Activated naive CD4-positive, alpha-beta T cell treated with anti-CD3 and anti-CD28 coated beads for 36 hours (primary cell): ENCODE measurements at regions of chr1 and their contacts with region 1.

Region 1: GRCh38 chr1:9910425-9911178 is 533 bp upstream of the CTNNBIP1 start:
- DNase-seq: peak; percentile 100
- H3K4me3 Mint-ChIP-seq: peak overlapping the region; percentile 95
- H3K27ac Mint-ChIP-seq: peak overlapping the region; percentile 93
- H3K4me1 Mint-ChIP-seq: peaks cover 20% of the 10 kb centered on the region
- H3K27me3 Mint-ChIP-seq: no peaks in the 10 kb centered on the region

Region 2: DNA sequence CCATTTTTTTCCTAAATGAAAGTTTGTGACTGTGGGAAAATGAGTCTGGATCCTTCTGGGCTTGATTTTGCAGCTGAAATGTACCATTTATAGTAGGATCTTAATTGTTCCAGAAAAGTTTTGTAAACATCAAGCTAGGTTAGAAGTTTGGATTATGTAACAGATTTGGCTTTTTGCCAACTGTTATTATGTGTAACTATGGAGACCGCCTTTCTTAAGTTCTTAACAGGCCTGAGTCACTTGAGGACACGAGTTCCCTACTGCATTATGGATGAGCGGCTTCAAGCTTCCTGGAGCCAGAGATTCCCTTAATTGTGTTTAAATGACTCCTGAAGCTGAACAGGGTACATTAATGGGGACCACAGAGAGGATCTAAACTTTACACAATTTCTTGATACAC is 349.2 kb before region 1 on chr1:
- CTCF ChIA-PET with region 1: no interaction called
- intact Hi-C with region 1: no loop called
- DNase-seq: no peak
- H3K4me3 Mint-ChIP-seq: no peak overlapping the region
- H3K27ac Mint-ChIP-seq: no peak overlapping the region
- H3K4me1 Mint-ChIP-seq: peaks cover 26% of the 10 kb centered on the region
- H3K27me3 Mint-ChIP-seq: no peaks in the 10 kb centered on the region

Region 3: DNA sequence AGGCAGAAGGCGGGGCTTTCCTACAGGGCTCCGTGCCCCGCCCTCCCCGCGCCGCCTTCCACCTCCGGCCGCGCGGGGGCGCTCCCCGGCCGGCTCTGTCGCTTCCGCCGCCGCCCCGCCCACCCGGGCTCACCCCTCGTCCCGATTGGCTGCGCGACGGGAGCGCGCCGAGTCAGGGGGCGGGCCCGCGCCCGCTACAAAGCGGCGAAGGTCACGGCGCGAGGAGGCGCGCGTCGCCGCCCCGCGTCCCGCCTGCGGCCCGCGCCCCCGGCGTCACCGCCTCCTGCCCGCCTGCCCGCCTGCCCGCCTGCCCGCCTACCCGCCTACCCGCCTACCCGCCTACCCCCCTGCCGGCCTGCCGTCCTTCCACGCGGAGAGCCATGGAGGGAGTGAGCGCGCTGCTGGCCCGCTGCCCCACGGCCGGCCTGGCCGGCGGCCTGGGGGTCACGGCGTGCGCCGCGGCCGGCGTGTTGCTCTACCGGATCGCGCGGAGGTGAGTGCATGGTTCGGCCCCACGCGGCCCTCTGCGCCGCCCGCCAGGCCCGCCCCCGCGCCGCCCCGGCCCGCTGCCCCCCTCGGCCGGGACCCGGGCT is 322.0 kb before region 1 on chr1 and contains the start of gene TMEM201:
- CTCF ChIA-PET with region 1: interaction called, 4 read pairs
- intact Hi-C with region 1: loop called (anchors 5 kb)
- DNase-seq: peak; percentile 92
- H3K4me3 Mint-ChIP-seq: peak within 1 kb of the TSS; percentile 78
- H3K27ac Mint-ChIP-seq: no peak within 1 kb of the TSS
- H3K4me1 Mint-ChIP-seq: peaks cover 38% of the 10 kb centered on the region
- H3K27me3 Mint-ChIP-seq: no peaks in the 10 kb centered on the region
- total RNA-seq, gene TMEM201: 9.1 to 9.8 TPM

Region 4: GRCh38 chr1:9874959-9875635 is 35.5 kb before region 1 on chr1:
- CTCF ChIA-PET with region 1: interaction called, 19 read pairs
- intact Hi-C with region 1: loop called (anchors 1 kb)
- DNase-seq: peak; percentile 84
- H3K4me3 Mint-ChIP-seq: no peak overlapping the region
- H3K27ac Mint-ChIP-seq: no peak overlapping the region
- H3K4me1 Mint-ChIP-seq: no peaks in the 10 kb centered on the region
- H3K27me3 Mint-ChIP-seq: no peaks in the 10 kb centered on the region

Region 5: DNA sequence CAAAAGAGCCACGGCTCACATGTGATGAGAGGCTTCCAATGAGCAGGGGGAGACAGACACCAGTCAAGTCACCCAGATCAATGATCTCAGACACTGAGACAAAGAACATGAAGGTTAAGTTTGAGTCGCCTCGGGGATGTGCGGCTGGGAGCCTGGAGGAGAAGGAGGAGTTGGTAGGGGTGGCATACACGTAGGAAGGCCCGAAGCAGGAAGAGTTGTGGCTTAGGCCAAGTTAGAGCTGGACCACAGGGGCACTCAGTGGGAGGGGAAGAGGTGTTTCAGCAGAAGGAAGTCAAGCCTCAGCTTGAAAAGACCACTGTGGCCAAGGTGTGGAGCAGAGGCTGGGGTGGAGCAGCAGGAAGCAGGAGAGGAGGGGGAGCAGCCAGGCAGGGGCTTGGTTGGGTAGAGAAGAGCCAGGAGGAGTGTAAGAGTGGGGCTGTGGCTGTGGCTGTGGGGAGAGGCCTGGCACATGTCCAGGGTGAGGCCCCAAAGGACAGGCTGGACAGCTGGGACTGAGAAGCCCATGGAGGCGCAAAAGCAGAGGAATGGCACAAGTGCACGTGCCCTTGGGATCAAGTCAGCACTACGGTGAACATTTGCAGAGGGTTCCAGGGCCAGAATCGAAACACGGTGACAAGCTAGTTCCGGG is 28.2 kb before region 1 on chr1:
- CTCF ChIA-PET with region 1: interaction called, 19 read pairs
- intact Hi-C with region 1: no loop called
- DNase-seq: no peak
- H3K4me3 Mint-ChIP-seq: no peak overlapping the region
- H3K27ac Mint-ChIP-seq: no peak overlapping the region
- H3K4me1 Mint-ChIP-seq: peaks cover 5% of the 10 kb centered on the region
- H3K27me3 Mint-ChIP-seq: no peaks in the 10 kb centered on the region

Region 6: DNA sequence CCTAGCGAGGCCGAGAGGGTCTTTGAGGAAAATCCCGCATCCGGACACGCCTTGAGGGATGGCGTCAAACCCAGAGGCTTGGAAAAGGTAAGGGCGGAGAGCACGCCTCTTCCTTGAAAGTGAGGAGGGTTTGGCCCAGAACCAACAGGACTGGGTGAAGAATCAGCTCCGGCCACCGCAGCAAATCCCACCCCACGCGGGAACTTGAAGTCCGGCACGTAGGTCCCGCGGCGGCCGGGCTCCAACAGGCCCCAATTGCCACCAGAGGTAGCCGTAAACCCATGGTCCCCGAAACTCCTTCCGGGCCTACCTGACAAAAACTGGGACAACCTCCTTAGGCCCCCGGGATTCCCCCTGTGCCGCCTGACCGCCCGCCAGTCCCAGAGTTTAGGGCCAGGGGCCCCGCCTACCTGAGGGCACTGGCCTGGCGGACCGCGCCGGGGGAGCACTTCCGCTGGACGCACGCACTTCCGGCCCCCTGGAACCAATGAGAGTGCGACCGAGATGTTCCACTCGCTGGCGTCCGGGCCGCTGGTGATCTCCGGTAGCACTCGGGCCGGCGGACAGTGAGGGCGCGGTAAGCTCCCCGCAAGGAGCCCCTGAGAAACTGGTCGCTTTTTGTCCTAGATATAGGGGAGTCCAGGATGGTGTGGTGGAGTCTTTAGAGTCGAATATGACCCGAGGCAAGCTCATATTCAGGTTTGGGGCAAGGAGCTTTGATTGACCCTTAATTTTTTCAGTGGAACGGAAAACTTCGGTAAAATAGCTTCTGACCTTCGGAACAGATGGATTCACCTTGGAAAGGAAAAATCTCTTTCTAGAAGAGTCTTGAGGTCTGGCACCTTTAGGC is 32.6 kb after region 1 on chr1 and contains the starts of genes LZIC and NMNAT1:
- CTCF ChIA-PET with region 1: no interaction called
- intact Hi-C with region 1: loop called (anchors 1 kb)
- DNase-seq: peak; percentile 94
- H3K4me3 Mint-ChIP-seq: peak within 1 kb of the TSS; percentile 95
- H3K27ac Mint-ChIP-seq: peak within 1 kb of the TSS; percentile 92
- H3K4me1 Mint-ChIP-seq: peaks cover 27% of the 10 kb centered on the region
- H3K27me3 Mint-ChIP-seq: no peaks in the 10 kb centered on the region
- total RNA-seq, gene LZIC: 26.1 to 27.0 TPM
- total RNA-seq, gene NMNAT1: 7.5 to 8.0 TPM

Region 7: DNA sequence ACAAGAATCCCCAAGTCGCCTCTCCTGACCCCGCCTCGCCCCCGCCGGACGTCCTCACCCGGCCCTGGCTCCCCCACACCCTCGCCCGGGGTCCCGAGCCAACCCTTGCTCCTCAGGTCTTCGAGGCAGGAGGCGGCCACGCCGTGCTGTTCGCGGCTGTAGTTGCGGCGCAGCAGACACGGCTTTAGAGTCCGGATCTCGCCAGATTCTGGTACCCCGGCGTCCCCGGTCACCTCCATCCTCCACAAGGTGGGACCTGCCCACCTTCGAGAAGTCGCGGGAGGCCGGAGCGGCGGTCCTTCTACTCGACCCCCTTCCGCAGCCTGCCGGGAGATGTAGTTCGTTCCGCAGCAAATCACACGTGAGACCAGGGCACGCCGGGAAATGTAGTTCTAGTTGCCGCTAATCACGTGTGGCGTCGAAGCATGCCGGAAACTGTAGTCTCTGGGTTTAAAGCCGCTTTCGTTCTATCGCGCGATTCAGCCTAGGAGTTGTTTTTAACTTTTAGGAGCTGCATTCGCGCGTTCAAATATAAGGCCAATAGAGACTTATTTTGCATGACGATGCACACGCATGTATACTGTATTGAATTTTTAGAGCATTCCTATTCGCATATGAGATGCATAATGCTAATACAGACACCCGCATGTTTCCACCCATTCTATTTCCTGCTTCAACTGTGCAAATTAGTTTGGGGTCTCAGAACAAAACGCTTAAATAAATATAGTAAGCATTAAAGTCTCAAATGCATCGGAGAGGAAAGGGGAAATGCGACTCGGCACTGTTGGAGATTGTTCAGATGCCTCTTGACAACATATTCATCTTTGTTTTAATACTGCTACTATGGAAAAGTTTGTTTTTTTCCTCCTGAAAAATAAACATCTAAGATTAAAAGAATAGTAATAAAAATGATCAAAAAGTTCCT is 561.9 kb after region 1 on chr1 and contains the start of gene DFFA:
- CTCF ChIA-PET with region 1: no interaction called
- intact Hi-C with region 1: loop called (anchors 2 kb)
- DNase-seq: peak; percentile 97
- H3K4me3 Mint-ChIP-seq: peak within 1 kb of the TSS; percentile 90
- H3K27ac Mint-ChIP-seq: peak within 1 kb of the TSS; percentile 84
- H3K4me1 Mint-ChIP-seq: peaks cover 38% of the 10 kb centered on the region
- H3K27me3 Mint-ChIP-seq: no peaks in the 10 kb centered on the region
- total RNA-seq, gene DFFA: 34.2 to 36.1 TPM